Colonic mucosa (tissue), 4 donors: ENCODE measurements at regions of chr11 and their contacts with region 1.

Region 1: DNA sequence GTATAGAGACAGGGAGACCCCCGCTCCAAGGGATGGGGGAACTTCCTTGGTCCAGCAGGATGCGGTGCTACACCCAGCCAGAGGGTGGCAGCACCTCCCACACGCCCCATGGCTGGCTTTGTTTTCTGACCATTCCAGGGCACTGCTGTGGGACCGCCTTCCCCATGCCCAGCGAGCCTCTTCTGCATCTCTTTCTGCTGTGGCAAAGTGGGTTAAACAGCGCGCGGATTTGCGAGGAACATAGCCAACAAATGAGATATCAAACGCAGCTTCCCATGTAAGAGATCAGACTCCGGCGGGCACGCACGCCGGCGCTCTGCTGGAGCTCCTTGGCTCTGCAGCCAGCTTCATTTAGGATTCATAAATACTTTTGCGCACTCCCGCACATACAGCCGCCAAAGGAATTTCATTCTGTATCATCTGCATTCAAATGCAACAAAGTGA is 485.8 kb upstream of the CADM1 start:
- DNase-seq: no peak
- H3K4me3 ChIP-seq: no peak overlapping the region
- H3K27ac ChIP-seq: no peak overlapping the region
- H3K4me1 ChIP-seq: no peaks in the 10 kb centered on the region
- H3K27me3 ChIP-seq: no peaks in the 10 kb centered on the region
- CTCF ChIP-seq: peak; percentile 68

Region 2: GRCh38 chr11:116217006-116217405 is 227.0 kb after region 1 on chr11:
- intact Hi-C with region 1: loop called (anchors 10 kb)
- DNase-seq: peak; percentile 49
- H3K4me3 ChIP-seq: no peak overlapping the region
- H3K27ac ChIP-seq: no peak overlapping the region
- H3K4me1 ChIP-seq: no peaks in the 10 kb centered on the region
- H3K27me3 ChIP-seq: no peaks in the 10 kb centered on the region
- CTCF ChIP-seq: peak; percentile 35